ENCODE measurements at regions of chr22 and their contacts with region 1.

Region 1: GRCh38 chr22:27747396-27748201 is 54.0 kb downstream of the MN1 start:
- DNase-seq: peak in 1 of 2 donors; percentile 82
- H3K4me3 ChIP-seq: no peak overlapping the region
- H3K27ac ChIP-seq: peak overlapping the region; percentile 86 to 88
- H3K4me1 ChIP-seq: peaks cover 18 to 32% of the 10 kb centered on the region in 2 donors
- H3K27me3 ChIP-seq: no peaks in the 10 kb centered on the region
- CTCF ChIP-seq: peak in 2 of 3 experiments; percentile 47 to 52

Region 2: GRCh38 chr22:27642104-27642800 is 105.3 kb before region 1 on chr22:
- intact Hi-C with region 1: no loop called
- DNase-seq: no peak
- H3K4me3 ChIP-seq: no peak overlapping the region
- H3K27ac ChIP-seq: no peak overlapping the region
- H3K4me1 ChIP-seq: peaks cover 3 to 5% of the 10 kb centered on the region in 2 donors
- H3K27me3 ChIP-seq: no peaks in the 10 kb centered on the region
- CTCF ChIP-seq: no peak

Region 3: DNA sequence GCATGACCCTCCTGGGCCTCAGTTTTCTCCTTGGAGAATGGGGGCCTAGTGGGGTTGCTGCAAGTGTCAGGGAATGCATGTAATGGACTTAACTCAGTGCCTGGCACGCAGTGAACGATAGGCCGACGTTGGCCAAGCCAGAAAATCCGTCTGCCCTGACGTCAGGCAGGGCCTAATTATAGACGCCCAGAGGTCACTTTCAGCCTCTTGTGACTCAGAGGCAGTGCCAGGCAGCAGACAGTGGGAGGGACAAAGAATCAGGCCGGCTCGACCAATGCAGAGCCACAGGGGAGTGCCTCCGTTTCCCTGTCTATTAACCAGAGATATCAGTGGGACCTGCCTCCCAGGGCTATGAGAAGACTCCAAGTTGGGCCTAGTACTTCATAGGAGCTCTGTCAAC is 61.1 kb before region 1 on chr22:
- intact Hi-C with region 1: loop called (anchors 2 kb)
- DNase-seq: peak; percentile 76 to 95
- H3K4me3 ChIP-seq: no peak overlapping the region
- H3K27ac ChIP-seq: peak overlapping the region; percentile 84 to 87
- H3K4me1 ChIP-seq: peaks cover 10 to 18% of the 10 kb centered on the region in 2 donors
- H3K27me3 ChIP-seq: no peaks in the 10 kb centered on the region
- CTCF ChIP-seq: no peak

Region 4: GRCh38 chr22:27718186-27719032 is 29.2 kb before region 1 on chr22:
- intact Hi-C with region 1: loop called (anchors 2 kb)
- DNase-seq: peak; percentile 51 to 89
- H3K4me3 ChIP-seq: no peak overlapping the region
- H3K27ac ChIP-seq: peak overlapping the region in 1 of 2 donors; percentile 46
- H3K4me1 ChIP-seq: peaks cover 2 to 3% of the 10 kb centered on the region in 2 donors
- H3K27me3 ChIP-seq: no peaks in the 10 kb centered on the region
- CTCF ChIP-seq: no peak

Region 5: GRCh38 chr22:27730654-27731433 is 16.8 kb before region 1 on chr22:
- intact Hi-C with region 1: no loop called
- DNase-seq: no peak
- H3K4me3 ChIP-seq: no peak overlapping the region
- H3K27ac ChIP-seq: no peak overlapping the region
- H3K4me1 ChIP-seq: peaks cover 0 to 2% of the 10 kb centered on the region in 2 donors
- H3K27me3 ChIP-seq: no peaks in the 10 kb centered on the region
- CTCF ChIP-seq: no peak